B cell (primary cell): ENCODE measurements at regions of chr2 and their contacts with region 1.

Region 1: GRCh38 chr2:39728941-39729351 is 50.1 kb downstream of the THUMPD2 start:
- DNase-seq: peak; percentile 42
- ATAC-seq: peak; percentile 45
- H3K4me3 ChIP-seq: no peak overlapping the region
- H3K4me3 Mint-ChIP-seq: no peak overlapping the region
- H3K27ac ChIP-seq: no peak overlapping the region
- H3K27ac Mint-ChIP-seq: peak overlapping the region; percentile 38
- H3K4me1 ChIP-seq: peaks cover 0 to 14% of the 10 kb centered on the region in 2 donors
- H3K4me1 Mint-ChIP-seq: peaks cover 9% of the 10 kb centered on the region
- H3K27me3 ChIP-seq: no peaks in the 10 kb centered on the region
- H3K27me3 Mint-ChIP-seq: no peaks in the 10 kb centered on the region
- CTCF ChIP-seq: peak; percentile 79

Region 2: GRCh38 chr2:39513641-39514094 is 215.3 kb before region 1 on chr2:
- CTCF ChIA-PET with region 1: interaction called, 15 read pairs
- POLR2A ChIA-PET with region 1: no interaction called
- intact Hi-C with region 1: loop called (anchors 1 kb)
- DNase-seq: peak; percentile 48
- ATAC-seq: peak; percentile 47
- H3K4me3 ChIP-seq: no peak overlapping the region
- H3K4me3 Mint-ChIP-seq: no peak overlapping the region
- H3K27ac ChIP-seq: no peak overlapping the region
- H3K27ac Mint-ChIP-seq: no peak overlapping the region
- H3K4me1 ChIP-seq: peaks cover 7 to 9% of the 10 kb centered on the region in 2 donors
- H3K4me1 Mint-ChIP-seq: peaks cover 17% of the 10 kb centered on the region
- H3K27me3 ChIP-seq: no peaks in the 10 kb centered on the region
- H3K27me3 Mint-ChIP-seq: no peaks in the 10 kb centered on the region
- CTCF ChIP-seq: peak; percentile 26

Region 3: DNA sequence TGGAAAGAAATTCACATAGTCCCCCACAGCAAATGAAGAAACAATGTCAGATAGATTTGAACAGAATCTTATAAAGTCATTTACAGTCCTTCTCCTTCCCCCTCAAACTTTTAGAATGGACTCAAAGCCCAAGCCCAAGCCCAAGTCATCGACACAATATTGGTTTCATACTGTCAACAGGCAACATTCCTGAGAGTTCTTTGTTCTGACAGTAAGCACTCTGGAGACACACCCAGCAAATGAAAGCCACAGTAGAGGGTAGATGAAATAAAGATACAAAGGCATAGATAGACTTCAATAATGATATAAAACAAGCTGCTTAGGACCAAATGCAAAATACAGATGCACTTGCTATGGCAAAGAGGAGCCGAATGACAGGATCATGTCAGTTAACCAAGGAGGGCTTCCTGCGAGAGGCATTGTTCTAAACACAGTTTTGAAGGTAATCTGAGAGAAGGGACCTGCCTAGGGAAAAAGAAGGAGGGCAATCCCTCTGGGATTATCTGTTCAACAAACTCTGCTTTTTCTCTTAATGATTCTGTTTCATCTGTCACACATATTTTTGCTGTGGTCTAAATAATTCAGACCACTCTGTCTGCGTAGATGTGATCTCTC is 194.7 kb before region 1 on chr2:
- CTCF ChIA-PET with region 1: no interaction called
- POLR2A ChIA-PET with region 1: no interaction called
- intact Hi-C with region 1: no loop called
- DNase-seq: no peak
- ATAC-seq: no peak
- H3K4me3 ChIP-seq: no peak overlapping the region
- H3K4me3 Mint-ChIP-seq: no peak overlapping the region
- H3K27ac ChIP-seq: no peak overlapping the region
- H3K27ac Mint-ChIP-seq: no peak overlapping the region
- H3K4me1 ChIP-seq: peaks cover 10 to 11% of the 10 kb centered on the region in 2 donors
- H3K4me1 Mint-ChIP-seq: peaks cover 21% of the 10 kb centered on the region
- H3K27me3 ChIP-seq: peaks cover 0 to 3% (median 0%) of the 10 kb centered on the region in 4 experiments
- H3K27me3 Mint-ChIP-seq: peaks cover 7% of the 10 kb centered on the region
- CTCF ChIP-seq: no peak

Region 4: DNA sequence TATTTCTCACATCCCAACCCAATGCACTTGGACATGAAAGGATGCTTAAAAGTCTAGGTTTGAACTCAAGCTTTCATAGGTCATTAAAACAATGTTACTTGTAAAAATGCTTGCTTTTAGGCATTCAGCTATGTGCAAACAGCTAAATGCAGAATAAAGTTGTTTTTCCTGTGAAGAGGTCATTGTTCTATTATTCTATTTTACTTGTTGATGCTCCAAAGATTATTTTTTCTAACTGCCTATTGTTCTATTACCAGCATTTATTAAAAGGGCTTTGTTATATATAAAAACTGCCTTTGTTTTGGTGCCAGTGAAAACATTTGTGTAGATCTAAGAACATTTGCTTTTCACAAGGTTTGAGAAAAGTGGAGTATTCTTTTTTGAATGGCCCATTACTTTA is 13.9 kb before region 1 on chr2:
- CTCF ChIA-PET with region 1: interaction called, 26 read pairs
- POLR2A ChIA-PET with region 1: no interaction called
- intact Hi-C with region 1: no loop called
- DNase-seq: no peak
- ATAC-seq: no peak
- H3K4me3 ChIP-seq: no peak overlapping the region
- H3K4me3 Mint-ChIP-seq: no peak overlapping the region
- H3K27ac ChIP-seq: no peak overlapping the region
- H3K27ac Mint-ChIP-seq: no peak overlapping the region
- H3K4me1 ChIP-seq: no peaks in the 10 kb centered on the region
- H3K4me1 Mint-ChIP-seq: no peaks in the 10 kb centered on the region
- H3K27me3 ChIP-seq: peaks cover 0 to 2% (median 0%) of the 10 kb centered on the region in 4 experiments
- H3K27me3 Mint-ChIP-seq: peaks cover 3% of the 10 kb centered on the region
- CTCF ChIP-seq: no peak

Region 5: GRCh38 chr2:39743269-39743776 is 14.4 kb after region 1 on chr2:
- CTCF ChIA-PET with region 1: interaction called, 12 read pairs
- POLR2A ChIA-PET with region 1: no interaction called
- intact Hi-C with region 1: no loop called
- DNase-seq: no peak
- ATAC-seq: no peak
- H3K4me3 ChIP-seq: no peak overlapping the region
- H3K4me3 Mint-ChIP-seq: no peak overlapping the region
- H3K27ac ChIP-seq: no peak overlapping the region
- H3K27ac Mint-ChIP-seq: no peak overlapping the region
- H3K4me1 ChIP-seq: no peaks in the 10 kb centered on the region
- H3K4me1 Mint-ChIP-seq: no peaks in the 10 kb centered on the region
- H3K27me3 ChIP-seq: no peaks in the 10 kb centered on the region
- H3K27me3 Mint-ChIP-seq: no peaks in the 10 kb centered on the region
- CTCF ChIP-seq: no peak